Astrocyte of the cerebellum (primary cell): ENCODE measurements at regions of chr13 and their contacts with region 1.

Region 1: GRCh38 chr13:20369886-20370361 is 137.8 kb upstream of the GJB6 start:
- DNase-seq: no peak
- H3K4me3 ChIP-seq: no peak overlapping the region
- CTCF ChIP-seq: no peak

Region 2: GRCh38 chr13:20288561-20288960 is 81.4 kb before region 1 on chr13:
- in situ Hi-C with region 1: loop called (anchors 5 kb)
- DNase-seq: no peak
- H3K4me3 ChIP-seq: no peak overlapping the region
- CTCF ChIP-seq: no peak

Region 3: DNA sequence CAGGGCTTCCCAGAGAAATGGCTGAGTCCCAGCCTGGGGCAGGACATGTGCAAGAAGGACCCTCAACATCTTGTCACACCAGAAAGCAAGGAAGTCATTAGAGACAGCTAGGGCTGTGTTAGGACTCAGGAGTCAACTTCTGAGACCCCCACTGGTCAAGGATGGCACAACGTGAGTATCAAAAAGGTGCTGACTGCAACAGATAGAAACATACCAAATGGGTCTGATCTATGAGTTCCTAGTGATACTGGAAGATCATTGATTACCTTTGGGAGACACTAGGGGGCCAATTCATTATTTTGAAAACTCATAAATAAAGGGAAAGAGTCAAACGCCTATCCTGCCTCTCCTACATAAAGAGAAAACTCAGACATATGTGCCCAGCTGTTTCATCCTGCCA is 64.3 kb before region 1 on chr13:
- in situ Hi-C with region 1: no loop called
- DNase-seq: no peak
- H3K4me3 ChIP-seq: no peak overlapping the region
- CTCF ChIP-seq: no peak